Ovary (tissue), 10 donors: ENCODE measurements at regions of chr12 and their contacts with region 1.

Region 1: DNA sequence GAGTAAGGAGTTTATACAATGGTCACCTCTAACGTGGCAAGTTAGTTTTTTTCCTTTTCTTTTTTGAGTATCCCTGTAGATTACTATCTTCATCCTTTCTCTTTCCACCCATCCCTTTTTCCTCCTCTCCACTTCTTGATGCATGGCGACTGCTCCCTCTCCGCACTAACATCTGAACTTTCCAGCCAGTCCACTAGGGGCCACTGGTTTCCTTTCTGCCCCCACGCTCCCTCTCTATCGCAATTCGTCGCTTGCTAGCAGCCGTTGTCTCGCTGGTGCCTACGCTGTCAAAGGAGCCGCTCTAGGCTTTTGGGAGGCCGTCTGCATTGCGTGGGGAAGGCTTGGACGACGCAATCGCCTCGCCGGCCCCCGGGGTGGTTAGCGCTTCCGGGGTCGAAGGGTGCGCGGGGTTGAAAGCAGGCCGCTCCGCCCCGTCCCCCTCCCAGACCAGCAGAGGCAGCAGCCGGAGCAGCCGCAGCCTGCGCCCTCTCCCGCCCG is at the start of gene PCBP2:
- DNase-seq: peak; percentile 97 to 98 (median 98)
- H3K4me3 ChIP-seq: peak within 1 kb of the TSS; percentile 92
- H3K27ac ChIP-seq: peak within 1 kb of the TSS; percentile 80 to 93
- H3K4me1 ChIP-seq: peaks cover 2% of the 10 kb centered on the region
- H3K27me3 ChIP-seq: no peaks in the 10 kb centered on the region
- CTCF ChIP-seq: peak; percentile 91 to 97 (median 97)
- EP300 ChIP-seq: no peak
- POLR2A ChIP-seq: peak; percentile 70
- total RNA-seq, gene PCBP2: 413 to 1,163 (median 948) TPM

Region 2: DNA sequence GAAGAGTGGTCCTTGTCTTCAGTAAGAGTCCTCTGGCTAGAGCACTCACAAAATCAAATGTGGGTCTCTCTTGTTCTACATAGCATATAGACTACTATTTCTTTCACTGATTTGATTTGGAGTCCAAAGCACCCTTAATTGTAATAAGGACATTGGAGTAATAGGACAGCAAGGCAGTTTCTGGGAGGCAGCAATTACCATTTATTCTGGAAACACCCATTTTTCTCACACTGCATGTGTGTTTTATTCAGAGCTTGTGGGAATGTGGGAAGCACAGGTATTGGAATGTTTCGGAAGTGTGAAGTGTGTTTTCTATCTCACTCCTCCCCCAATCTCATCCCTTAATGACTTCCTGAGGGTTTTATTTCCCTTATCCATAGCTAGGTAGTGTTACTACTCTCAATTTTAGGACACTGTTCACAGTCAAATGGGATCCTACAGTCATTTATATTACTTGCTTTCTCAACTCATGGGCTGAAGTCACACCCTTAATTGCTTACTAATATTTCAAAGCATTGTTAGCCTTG is 20.4 kb after region 1 on chr12:
- intact Hi-C with region 1: loop called in 1 of 4 experiments (anchors 2 kb)
- DNase-seq: no peak
- H3K4me3 ChIP-seq: no peak overlapping the region
- H3K27ac ChIP-seq: no peak overlapping the region
- H3K4me1 ChIP-seq: no peaks in the 10 kb centered on the region
- H3K27me3 ChIP-seq: no peaks in the 10 kb centered on the region
- CTCF ChIP-seq: no peak
- EP300 ChIP-seq: no peak
- POLR2A ChIP-seq: no peak

Region 3: DNA sequence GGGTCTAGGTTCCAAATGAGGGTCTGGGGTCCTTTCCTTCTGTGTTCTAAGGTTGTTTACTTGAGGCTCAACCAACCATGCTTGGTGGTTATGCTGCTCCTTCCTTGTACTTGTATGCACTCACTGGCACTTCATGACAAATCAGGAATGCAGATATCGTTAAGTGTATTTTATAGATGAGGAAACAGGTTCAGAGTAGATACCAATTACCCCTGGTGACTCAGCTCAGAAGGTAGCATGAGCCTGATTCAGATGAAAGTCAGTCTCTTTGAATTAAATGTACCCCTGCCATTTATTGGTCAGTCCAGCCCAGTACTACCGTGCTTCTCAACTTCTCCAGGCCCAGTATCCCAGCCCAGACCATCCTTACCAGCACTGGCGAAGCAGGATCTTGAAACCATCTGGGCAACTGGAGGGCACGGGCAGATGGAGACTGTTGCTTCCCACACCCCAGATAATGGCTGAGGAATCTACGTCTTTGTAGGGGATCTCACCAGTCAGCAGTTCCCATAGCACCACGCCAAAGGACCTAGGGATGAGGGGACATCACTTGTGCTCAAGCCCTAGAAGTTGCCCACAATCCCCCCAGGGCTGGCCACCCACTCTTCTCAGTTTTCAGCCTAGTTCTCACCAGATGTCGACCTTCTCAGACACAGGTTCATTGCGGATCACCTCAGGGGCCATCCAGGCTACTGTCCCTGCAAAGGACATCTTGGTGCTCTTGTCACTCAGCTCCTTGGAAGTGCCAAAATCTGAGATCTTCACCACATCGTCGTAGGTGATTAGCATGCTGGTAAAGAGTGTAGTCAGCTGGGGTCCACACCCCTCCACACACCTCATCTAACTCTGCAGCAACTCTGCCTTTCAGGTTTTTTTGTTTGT is 33.2 kb after region 1 on chr12:
- intact Hi-C with region 1: loop called in 1 of 4 experiments (anchors 5 kb)
- DNase-seq: no peak
- H3K4me3 ChIP-seq: no peak overlapping the region
- H3K27ac ChIP-seq: no peak overlapping the region
- H3K4me1 ChIP-seq: peaks cover 2% of the 10 kb centered on the region
- H3K27me3 ChIP-seq: no peaks in the 10 kb centered on the region
- CTCF ChIP-seq: no peak
- EP300 ChIP-seq: no peak
- POLR2A ChIP-seq: no peak